ENCODE measurements at regions of chr2 and their contacts with region 1.

Region 1: GRCh38 chr2:174546581-174547506 is 50.8 kb downstream of the WIPF1 start:
- DNase-seq: peak; percentile 38 to 86 (median 59)
- ATAC-seq: peak; percentile 99
- H3K4me3 ChIP-seq: peak overlapping the region; percentile 47
- H3K27ac ChIP-seq: peak overlapping the region; percentile 59
- H3K4me1 ChIP-seq: peaks cover 0 to 3% of the 10 kb centered on the region in 2 experiments; a peak in 1 of 5 replicates
- H3K27me3 ChIP-seq: peaks cover 3 to 4% of the 10 kb centered on the region in 2 experiments; a peak in 1 of 5 replicates
- CTCF ChIP-seq: peak; percentile 88 to 97 (median 89)
- EP300 ChIP-seq: 0 out of 2 replicates have a peak, but pooled peaks have one; percentile 4
- POLR2A ChIP-seq: peak; percentile 66
- RAD21 ChIP-seq: peak; percentile 93 to 97

Region 2: GRCh38 chr2:174350018-174350417 is 196.8 kb before region 1 on chr2:
- CTCF ChIA-PET with region 1: no interaction called
- POLR2A ChIA-PET with region 1: no interaction called
- in situ Hi-C with region 1: no loop called
- intact Hi-C with region 1: loop called (anchors 5 kb)
- DNase-seq: peak in 2 of 4 experiments; percentile 47 to 57
- ATAC-seq: peak; percentile 89
- H3K4me3 ChIP-seq: no peak overlapping the region
- H3K27ac ChIP-seq: no peak overlapping the region
- H3K4me1 ChIP-seq: no peaks in the 10 kb centered on the region; a peak in 2 of 5 replicates
- H3K27me3 ChIP-seq: no peaks in the 10 kb centered on the region
- CTCF ChIP-seq: peak; percentile 43 to 67 (median 46); a peak in 4 of 6 replicates
- EP300 ChIP-seq: no peak
- POLR2A ChIP-seq: no peak
- RAD21 ChIP-seq: peak in 1 of 2 experiments; percentile 52; a peak in 2 of 4 replicates

Region 3: DNA sequence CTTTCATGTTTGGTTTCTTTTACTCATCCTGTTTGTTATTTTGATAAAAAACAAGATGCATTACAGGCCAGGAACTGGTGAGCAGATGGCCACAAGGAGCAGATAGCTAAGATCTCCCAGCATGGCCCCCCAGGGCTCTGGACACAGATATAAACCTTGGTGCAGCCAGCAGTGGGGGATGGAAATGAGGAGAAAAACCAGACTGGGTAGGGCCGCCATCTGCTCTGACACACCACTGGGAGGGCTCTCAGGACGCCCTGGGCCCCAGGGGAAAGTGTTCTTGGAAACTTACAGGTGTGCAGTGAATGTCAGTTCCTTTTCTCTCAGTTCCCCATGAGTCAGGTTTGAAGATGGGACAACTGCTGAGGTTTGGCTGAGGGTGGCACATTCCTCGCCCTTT is 10.5 kb before region 1 on chr2:
- CTCF ChIA-PET with region 1: no interaction called
- POLR2A ChIA-PET with region 1: interaction called, 17 read pairs
- in situ Hi-C with region 1: no loop called
- intact Hi-C with region 1: no loop called
- DNase-seq: peak in 1 of 4 experiments; percentile 12
- ATAC-seq: peak; percentile 42
- H3K4me3 ChIP-seq: no peak overlapping the region
- H3K27ac ChIP-seq: no peak overlapping the region
- H3K4me1 ChIP-seq: no peaks in the 10 kb centered on the region
- H3K27me3 ChIP-seq: peaks cover 40 to 41% of the 10 kb centered on the region in 2 experiments
- CTCF ChIP-seq: no peak
- EP300 ChIP-seq: no peak
- POLR2A ChIP-seq: no peak
- RAD21 ChIP-seq: no peak

Measured in K562 (cell line).